Cardiac septum (tissue), 1 donor: ENCODE measurements at regions of chr2 and their contacts with region 1.

Region 1: GRCh38 chr2:159615140-159615951 is 1.0 kb downstream of the BAZ2B start:
- DNase-seq: peak; percentile 94

Region 2: DNA sequence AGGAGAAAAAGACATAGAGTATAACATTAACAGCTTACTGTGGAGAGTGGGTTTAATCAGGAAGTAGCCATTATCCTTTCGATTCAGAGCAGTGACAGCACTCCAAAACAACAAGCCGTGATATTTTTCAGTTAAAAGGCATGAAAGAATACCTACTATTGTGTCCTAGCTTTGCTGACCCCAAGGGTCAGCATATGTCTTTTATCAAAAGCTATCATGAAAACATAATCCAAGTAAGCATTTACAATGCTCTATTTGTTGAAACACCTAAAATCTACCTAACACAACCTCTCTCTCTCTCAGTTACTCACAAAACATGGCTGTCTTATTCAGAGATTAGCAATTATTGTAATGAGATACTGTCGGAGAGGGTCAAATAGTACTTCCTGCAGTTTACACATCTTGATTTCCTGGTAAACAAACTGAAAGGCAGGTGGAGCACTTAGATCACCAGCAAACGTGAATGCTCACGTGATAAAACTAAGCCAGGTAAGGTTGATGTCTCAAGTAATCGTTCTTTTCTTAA is 99.0 kb before region 1 on chr2:
- intact Hi-C with region 1: loop called (anchors 5 kb)
- DNase-seq: no peak

Region 3: DNA sequence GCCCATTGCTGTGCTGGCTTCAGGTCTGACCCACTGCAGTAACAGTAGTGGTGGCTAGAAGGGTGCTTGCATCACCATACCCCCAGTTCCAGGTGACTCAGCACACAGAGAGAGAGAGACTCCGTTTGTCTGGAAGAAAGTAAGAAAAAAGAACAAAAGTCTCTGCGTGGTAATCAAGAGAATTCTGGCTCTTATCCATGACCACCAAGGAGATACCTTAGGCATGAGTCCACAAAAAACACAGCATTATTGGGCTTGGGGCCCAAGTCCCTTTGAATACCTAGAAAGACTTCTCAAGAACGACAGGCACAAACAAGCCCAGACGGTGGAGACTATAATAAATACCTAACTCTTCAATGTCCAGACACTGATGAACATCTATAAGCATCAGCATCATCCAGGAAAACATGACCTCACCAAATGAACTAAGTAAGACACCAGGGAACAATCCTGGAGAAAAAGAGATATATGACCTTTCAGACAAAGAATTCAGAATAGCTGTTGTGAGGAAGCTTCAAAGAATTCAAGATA is 22.7 kb after region 1 on chr2:
- intact Hi-C with region 1: no loop called
- DNase-seq: no peak

Region 4: GRCh38 chr2:159712143-159712928 is 97.0 kb after region 1 on chr2 and contains the start of gene MARCHF7:
- intact Hi-C with region 1: loop called (anchors 1 kb)
- DNase-seq: peak; percentile 98
- total RNA-seq, gene MARCHF7: 86.5 TPM

Region 5: DNA sequence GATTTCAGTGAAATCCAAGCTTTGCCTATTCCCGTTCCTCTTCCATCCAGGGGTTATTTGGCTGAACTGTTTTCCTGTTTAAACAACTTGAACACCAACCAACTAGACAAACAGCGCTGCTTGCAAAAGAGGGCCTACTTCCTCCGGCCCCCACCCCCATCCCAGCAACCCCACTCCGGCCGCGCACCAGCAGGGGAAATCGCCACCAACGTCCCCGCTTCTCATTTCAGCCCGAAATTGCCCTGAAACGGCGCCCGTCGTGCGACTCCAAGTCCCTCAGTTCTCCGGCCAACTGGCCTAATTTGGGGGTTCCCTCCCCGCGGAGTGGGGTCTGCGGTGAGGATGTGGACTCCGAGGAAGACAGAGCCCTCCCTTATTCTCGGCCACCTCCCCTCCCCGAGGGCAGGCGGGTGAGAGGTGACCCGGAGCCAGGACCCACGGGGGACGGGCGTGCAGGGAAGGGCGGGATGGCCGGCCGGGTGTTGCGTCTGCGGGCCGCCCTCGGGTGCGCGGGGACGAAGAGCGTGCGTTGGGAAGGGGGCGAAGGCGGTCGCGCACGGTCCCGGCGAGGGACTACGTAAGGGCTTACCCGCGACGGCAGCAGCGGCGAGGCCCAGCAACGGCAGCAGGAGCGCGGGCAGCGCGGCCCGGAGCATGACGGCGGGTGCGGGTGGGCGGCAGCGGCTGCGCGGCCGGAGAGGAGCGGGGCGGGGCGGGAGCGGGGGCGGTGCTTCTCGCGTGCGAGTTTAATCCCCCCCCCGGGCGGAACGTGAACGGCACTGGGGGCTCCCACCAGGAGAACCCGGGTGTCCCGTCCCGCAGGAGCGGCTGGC is 182.4 kb after region 1 on chr2 and contains the start of gene CD302:
- intact Hi-C with region 1: loop called (anchors 5 kb)
- DNase-seq: peak; percentile 85
- total RNA-seq, gene CD302: 10.8 TPM